T-cell (primary cell): ENCODE measurements at regions of chr19 and their contacts with region 1.

Region 1: GRCh38 chr19:48244281-48244680 is 11.4 kb downstream of the CARD8 start:
- DNase-seq: peak in 27 of 35 experiments; percentile 2 to 69 (median 32)
- ATAC-seq: peak; percentile 96 to 99 (median 98)
- H3K4me3 ChIP-seq: peak overlapping the region in 1 of 2 donors; percentile 10
- H3K4me3 Mint-ChIP-seq: peak overlapping the region; percentile 58 to 80 (median 66)
- H3K27ac ChIP-seq: peak overlapping the region; percentile 78
- H3K27ac Mint-ChIP-seq: peak overlapping the region; percentile 89 to 90
- H3K4me1 ChIP-seq: peaks cover 22 to 27% of the 10 kb centered on the region in 2 experiments
- H3K4me1 Mint-ChIP-seq: peaks cover 50 to 61% (median 53%) of the 10 kb centered on the region in 3 donors
- H3K27me3 ChIP-seq: no peaks in the 10 kb centered on the region
- H3K27me3 Mint-ChIP-seq: no peaks in the 10 kb centered on the region

Region 2: DNA sequence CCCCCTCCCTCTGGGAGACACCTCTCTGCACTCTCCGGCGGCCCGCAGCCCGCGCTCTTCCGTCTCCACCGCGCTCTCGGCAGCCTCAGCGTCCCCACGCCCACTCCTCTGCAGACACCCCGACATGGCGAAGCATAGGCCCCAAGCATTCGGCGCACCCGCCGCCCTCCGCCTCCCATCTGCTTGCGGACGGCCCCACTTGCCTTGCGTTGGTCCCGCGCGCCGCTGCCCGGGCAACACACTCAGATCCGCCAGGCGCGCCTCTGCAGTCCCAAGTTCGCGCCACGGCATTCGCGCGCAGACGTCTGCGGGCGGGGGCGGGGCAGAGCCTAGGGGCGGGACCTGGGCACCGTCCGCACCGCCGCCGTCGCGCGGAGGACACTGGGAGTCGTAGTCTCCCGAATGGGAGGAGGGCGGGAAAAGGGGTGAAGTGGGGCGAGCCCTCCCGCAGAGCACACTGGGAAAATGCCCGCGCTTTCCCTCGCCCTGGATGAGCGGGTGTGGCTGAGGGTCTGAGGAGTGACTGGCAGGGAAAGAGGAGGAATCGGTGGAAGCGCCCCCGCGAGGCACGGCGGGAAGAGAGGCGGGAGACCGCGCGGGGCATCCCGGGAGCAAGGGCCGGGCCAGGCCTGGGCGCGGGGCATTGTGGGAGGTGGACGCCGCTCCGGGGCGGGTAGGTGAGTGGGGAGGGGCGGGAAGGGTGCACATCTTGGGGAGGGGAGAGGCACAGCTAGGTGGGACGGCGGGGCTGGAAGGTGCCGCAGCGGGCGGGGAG is 74.1 kb before region 1 on chr19 and contains the starts of genes LIG1 and ZSWIM9:
- CTCF ChIA-PET with region 1: no interaction called
- POLR2A ChIA-PET with region 1: no interaction called
- DNase-seq: peak; percentile 82 to 95 (median 88)
- ATAC-seq: peak; percentile 89 to 91 (median 90)
- H3K4me3 ChIP-seq: peak within 1 kb of the TSS; percentile 77 to 97
- H3K4me3 Mint-ChIP-seq: peak within 1 kb of the TSS; percentile 88 to 91 (median 90)
- H3K27ac ChIP-seq: peak within 1 kb of the TSS; percentile 85
- H3K27ac Mint-ChIP-seq: peak within 1 kb of the TSS; percentile 91 to 99
- H3K4me1 ChIP-seq: peaks cover 11 to 18% of the 10 kb centered on the region in 2 experiments
- H3K4me1 Mint-ChIP-seq: peaks cover 18 to 43% (median 26%) of the 10 kb centered on the region in 3 donors
- H3K27me3 ChIP-seq: no peaks in the 10 kb centered on the region
- H3K27me3 Mint-ChIP-seq: no peaks in the 10 kb centered on the region
- total RNA-seq, gene LIG1: 58.7 to 127 (median 112) TPM
- total RNA-seq, gene ZSWIM9: 5.4 to 14.7 (median 11.6) TPM

Region 3: GRCh38 chr19:48190288-48190884 is 53.9 kb before region 1 on chr19:
- CTCF ChIA-PET with region 1: no interaction called
- POLR2A ChIA-PET with region 1: no interaction called
- DNase-seq: peak in 27 of 35 experiments; percentile 30 to 74 (median 50)
- ATAC-seq: peak; percentile 70 to 94 (median 82)
- H3K4me3 ChIP-seq: no peak overlapping the region
- H3K4me3 Mint-ChIP-seq: no peak overlapping the region
- H3K27ac ChIP-seq: no peak overlapping the region
- H3K27ac Mint-ChIP-seq: peak overlapping the region in 1 of 2 donors; percentile 39
- H3K4me1 ChIP-seq: peaks cover 0 to 2% of the 10 kb centered on the region in 2 experiments
- H3K4me1 Mint-ChIP-seq: peaks cover 7 to 14% (median 8%) of the 10 kb centered on the region in 3 donors
- H3K27me3 ChIP-seq: no peaks in the 10 kb centered on the region
- H3K27me3 Mint-ChIP-seq: no peaks in the 10 kb centered on the region

Region 4: DNA sequence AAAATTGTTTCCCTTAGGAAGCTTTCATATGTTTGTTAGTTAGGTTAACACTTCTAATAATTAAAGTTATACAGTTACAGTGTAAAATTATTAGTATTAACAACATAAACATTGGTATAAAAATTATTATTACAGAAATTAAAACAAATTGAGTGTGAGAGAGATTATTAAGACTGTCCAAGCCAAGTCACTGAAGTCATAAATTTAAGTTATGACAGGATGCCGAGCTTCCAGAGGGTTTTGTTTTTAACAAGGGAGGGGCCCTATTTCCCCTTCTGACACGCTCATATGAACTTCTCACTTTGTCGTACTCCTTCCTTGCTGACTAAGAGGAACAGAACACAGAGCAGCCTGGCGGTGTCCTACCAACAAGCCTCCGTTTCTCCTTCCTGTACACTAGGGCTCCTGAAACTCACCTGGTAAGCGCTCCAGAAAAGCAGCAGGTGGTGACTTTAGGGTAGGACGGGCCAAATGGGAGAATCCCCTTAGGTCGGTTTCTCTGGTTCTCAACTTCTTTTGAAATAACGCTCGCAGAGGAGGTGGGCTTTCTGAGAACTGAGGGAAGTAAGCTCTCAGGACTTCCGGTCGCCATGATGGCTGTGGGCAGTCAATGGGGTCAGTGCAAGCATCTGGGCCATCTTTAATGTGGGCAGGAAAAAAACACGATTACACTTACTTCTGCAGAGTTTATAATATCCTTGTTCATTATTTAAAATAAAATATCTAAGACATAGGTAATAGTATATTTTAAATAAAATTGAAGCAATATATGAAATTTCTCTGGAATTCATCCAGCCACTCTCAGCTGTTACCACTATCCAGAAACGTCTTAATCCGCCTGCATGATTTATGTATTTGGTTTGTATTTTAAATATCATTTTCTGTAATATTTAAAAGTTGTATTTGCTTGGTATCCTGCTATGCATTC is 11.4 kb after region 1 on chr19 and contains the start of gene CARD8:
- CTCF ChIA-PET with region 1: interaction called in 1 of 2 experiments, 12 read pairs
- POLR2A ChIA-PET with region 1: interaction called in 1 of 2 experiments, 3 read pairs
- DNase-seq: peak; percentile 67 to 90 (median 78)
- ATAC-seq: peak; percentile 85 to 88 (median 87)
- H3K4me3 ChIP-seq: peak within 1 kb of the TSS; percentile 63 to 85
- H3K4me3 Mint-ChIP-seq: peak within 1 kb of the TSS; percentile 94 to 99 (median 94)
- H3K27ac ChIP-seq: peak within 1 kb of the TSS; percentile 76
- H3K27ac Mint-ChIP-seq: peak within 1 kb of the TSS; percentile 98 to 99
- H3K4me1 ChIP-seq: peaks cover 23 to 56% of the 10 kb centered on the region in 2 experiments
- H3K4me1 Mint-ChIP-seq: peaks cover 71 to 81% (median 75%) of the 10 kb centered on the region in 3 donors
- H3K27me3 ChIP-seq: no peaks in the 10 kb centered on the region
- H3K27me3 Mint-ChIP-seq: no peaks in the 10 kb centered on the region
- total RNA-seq, gene CARD8: 146 to 224 (median 191) TPM

Region 5: DNA sequence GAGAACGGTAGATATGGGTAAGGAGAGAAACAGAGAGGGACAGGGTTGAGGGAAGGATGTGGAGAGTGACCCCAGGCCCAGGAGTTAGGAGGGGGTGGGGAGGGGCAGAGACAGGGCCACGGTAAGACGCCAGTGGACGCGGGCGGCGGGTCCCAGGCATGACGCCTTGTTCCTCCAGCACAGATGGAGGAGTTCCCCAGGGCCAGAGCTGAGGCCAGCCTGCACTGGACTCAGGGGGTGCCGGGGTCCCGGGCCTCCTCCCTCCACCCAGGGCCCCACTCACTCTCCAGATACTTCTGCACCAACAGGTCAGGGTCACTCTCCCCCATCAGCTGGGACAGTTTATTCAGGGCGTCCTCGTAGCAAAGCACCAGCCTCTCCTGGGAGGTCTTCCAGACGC is 59.1 kb after region 1 on chr19:
- CTCF ChIA-PET with region 1: no interaction called
- POLR2A ChIA-PET with region 1: no interaction called
- DNase-seq: no peak
- ATAC-seq: no peak
- H3K4me3 ChIP-seq: no peak overlapping the region
- H3K4me3 Mint-ChIP-seq: no peak overlapping the region
- H3K27ac ChIP-seq: no peak overlapping the region
- H3K27ac Mint-ChIP-seq: no peak overlapping the region
- H3K4me1 ChIP-seq: no peaks in the 10 kb centered on the region
- H3K4me1 Mint-ChIP-seq: no peaks in the 10 kb centered on the region
- H3K27me3 ChIP-seq: peaks cover 0 to 8% of the 10 kb centered on the region in 2 experiments
- H3K27me3 Mint-ChIP-seq: no peaks in the 10 kb centered on the region